GM13977 (cell line): ENCODE measurements at regions of chr2 and their contacts with region 1.

Region 1: DNA sequence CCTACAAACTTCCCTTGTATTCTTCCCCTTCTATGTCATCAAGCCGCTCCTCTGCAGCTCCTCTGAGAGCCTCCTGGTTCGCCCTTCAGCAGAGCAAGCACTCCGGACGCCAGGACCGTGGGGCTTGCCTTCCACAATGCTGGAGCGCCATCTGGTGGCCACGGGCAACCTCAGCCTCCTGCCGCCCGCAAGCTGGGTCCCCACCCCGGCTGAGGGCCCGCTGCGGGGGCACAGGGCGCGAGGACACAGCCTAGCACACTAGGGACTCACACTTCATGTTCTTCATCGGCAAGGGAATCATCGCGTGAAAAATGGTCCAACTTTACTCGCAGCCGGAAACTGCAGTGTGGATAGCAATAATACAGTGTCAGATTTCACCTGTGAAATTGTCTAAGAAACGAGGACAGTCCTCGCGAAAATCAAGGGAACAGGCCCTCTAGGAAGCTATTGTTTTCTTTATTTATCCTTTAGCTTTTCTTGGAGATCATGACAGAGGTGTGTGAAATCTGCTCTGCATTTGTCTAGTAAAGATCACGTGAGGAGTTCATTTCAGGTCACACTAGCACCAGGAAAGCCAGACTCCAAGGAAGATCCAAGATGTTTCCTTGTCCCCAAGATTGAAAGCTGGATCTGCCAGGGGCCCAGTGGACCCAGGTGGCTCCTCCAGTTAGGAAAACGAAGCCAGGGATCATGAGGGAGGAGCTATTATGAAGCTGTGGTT is 5.8 kb downstream of the PRLH start:
- DNase-seq: peak; percentile 96
- CTCF ChIP-seq: peak; percentile 96

Region 2: GRCh38 chr2:237500681-237501424 is 71.3 kb before region 1 on chr2:
- in situ Hi-C with region 1: loop called (anchors 10 kb)
- DNase-seq: no peak
- CTCF ChIP-seq: no peak